SK-N-SH (cell line): ENCODE measurements at regions of chr6 and their contacts with region 1.

Region 1: GRCh38 chr6:35240840-35241801 is 18.4 kb upstream of the ZNF76 start:
- DNase-seq: peak; percentile 84
- H3K4me3 ChIP-seq: no peak overlapping the region; a peak in 1 of 4 replicates
- H3K27ac ChIP-seq: no peak overlapping the region
- H3K4me1 ChIP-seq: peaks cover 0 to 12% of the 10 kb centered on the region in 2 experiments; a peak in 1 of 4 replicates
- H3K27me3 ChIP-seq: no peaks in the 10 kb centered on the region
- CTCF ChIP-seq: peak; percentile 98
- EP300 ChIP-seq: no peak
- RAD21 ChIP-seq: peak; percentile 94

Region 2: DNA sequence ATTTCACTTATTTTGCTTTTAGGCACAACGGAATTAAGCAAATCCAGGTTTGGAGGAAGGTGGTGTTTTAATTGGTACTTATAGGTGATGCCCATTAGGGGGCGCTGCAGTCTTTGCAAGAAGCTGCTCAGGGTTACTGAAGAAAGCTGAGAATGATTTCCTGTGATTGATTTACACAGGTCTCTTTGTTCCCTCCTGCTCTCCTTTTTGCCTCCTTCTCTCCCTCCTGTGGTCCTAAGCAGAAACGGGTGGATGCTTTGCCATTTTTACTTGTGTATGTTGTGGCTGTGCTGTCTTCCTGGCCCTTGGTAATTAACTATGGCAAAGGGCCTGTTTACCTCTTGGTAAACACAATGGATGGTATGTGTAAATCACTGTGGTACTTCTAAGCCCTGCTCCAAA is 254.3 kb before region 1 on chr6:
- CTCF ChIA-PET with region 1: interaction called, 45 read pairs
- POLR2A ChIA-PET with region 1: no interaction called
- DNase-seq: peak; percentile 66
- H3K4me3 ChIP-seq: peak overlapping the region in 1 of 2 experiments; percentile 45; a peak in 1 of 4 replicates
- H3K27ac ChIP-seq: no peak overlapping the region
- H3K4me1 ChIP-seq: peaks cover 0 to 4% of the 10 kb centered on the region in 2 experiments; a peak in 2 of 4 replicates
- H3K27me3 ChIP-seq: no peaks in the 10 kb centered on the region
- CTCF ChIP-seq: peak; percentile 88
- EP300 ChIP-seq: no peak
- RAD21 ChIP-seq: peak; percentile 87

Region 3: GRCh38 chr6:35152067-35152707 is 88.9 kb before region 1 on chr6:
- CTCF ChIA-PET with region 1: interaction called, 148 read pairs
- POLR2A ChIA-PET with region 1: no interaction called
- DNase-seq: no peak
- H3K4me3 ChIP-seq: no peak overlapping the region
- H3K27ac ChIP-seq: peak overlapping the region in 1 of 2 experiments; percentile 25; a peak in 2 of 4 replicates
- H3K4me1 ChIP-seq: peaks cover 0 to 12% of the 10 kb centered on the region in 2 experiments; a peak in 2 of 4 replicates
- H3K27me3 ChIP-seq: no peaks in the 10 kb centered on the region
- CTCF ChIP-seq: no peak
- EP300 ChIP-seq: no peak
- RAD21 ChIP-seq: no peak

Region 4: DNA sequence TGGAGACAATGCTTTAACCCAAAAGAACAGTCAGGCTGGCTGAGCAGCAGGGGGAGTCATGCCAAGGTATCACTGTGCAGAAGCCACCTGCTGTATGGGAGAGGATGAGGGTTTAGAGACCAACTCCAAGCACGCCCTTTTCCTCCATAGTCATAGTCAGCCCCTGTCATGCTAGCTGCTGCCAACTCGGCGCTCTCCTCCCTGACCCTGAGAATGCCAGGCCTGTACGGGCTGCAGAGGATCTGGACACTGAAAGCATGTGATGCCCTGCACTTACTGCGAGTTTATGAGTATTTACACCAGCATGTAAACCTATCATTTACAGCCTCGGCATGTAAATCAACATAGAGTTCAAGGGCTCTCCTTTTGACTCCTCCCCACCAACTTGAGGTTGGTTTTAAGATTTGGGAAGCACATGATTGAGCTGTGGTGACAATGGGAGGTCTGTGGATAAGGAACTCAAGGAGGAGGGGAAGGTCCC is 39.0 kb before region 1 on chr6:
- CTCF ChIA-PET with region 1: interaction called, 55 read pairs
- POLR2A ChIA-PET with region 1: no interaction called
- DNase-seq: no peak
- H3K4me3 ChIP-seq: no peak overlapping the region
- H3K27ac ChIP-seq: no peak overlapping the region
- H3K4me1 ChIP-seq: no peaks in the 10 kb centered on the region
- H3K27me3 ChIP-seq: no peaks in the 10 kb centered on the region
- CTCF ChIP-seq: no peak
- EP300 ChIP-seq: no peak
- RAD21 ChIP-seq: no peak

Region 5: DNA sequence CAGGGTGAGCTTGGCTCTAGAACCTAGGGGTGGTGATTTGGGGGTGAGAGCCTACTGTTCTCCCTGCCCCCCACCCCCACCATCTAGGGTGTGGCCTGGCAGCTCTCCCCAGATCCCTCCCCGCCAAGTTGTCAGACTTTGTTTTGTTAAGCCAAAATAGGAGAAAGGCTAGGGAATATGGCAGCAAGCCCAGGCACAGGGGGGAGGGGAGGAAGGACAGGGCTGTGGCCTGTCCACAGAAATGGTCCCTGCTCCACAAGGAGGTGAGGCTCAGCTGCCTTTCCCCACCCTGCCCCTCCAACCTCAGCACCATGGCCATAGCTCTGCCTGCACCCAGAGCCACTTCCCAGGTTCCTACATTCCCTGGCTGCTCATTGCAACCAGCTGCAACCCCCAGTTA is 10.2 kb before region 1 on chr6:
- CTCF ChIA-PET with region 1: interaction called, 163 read pairs
- POLR2A ChIA-PET with region 1: interaction called, 3 read pairs
- DNase-seq: no peak
- H3K4me3 ChIP-seq: no peak overlapping the region
- H3K27ac ChIP-seq: no peak overlapping the region
- H3K4me1 ChIP-seq: peaks cover 0 to 10% of the 10 kb centered on the region in 2 experiments; a peak in 1 of 4 replicates
- H3K27me3 ChIP-seq: no peaks in the 10 kb centered on the region
- CTCF ChIP-seq: no peak
- EP300 ChIP-seq: no peak
- RAD21 ChIP-seq: no peak